Thyroid gland (tissue), 4 donors: ENCODE measurements at regions of chr10 and their contacts with region 1.

Region 1: GRCh38 chr10:69392481-69393000 is 24.2 kb downstream of the TACR2 start:
- DNase-seq: peak; percentile 92 to 93
- H3K4me3 ChIP-seq: no peak overlapping the region
- H3K27ac ChIP-seq: peak overlapping the region; percentile 68 to 87 (median 75)
- H3K4me1 ChIP-seq: peaks cover 31 to 39% of the 10 kb centered on the region in 2 donors
- H3K27me3 ChIP-seq: no peaks in the 10 kb centered on the region
- CTCF ChIP-seq: peak; percentile 94 to 99 (median 97)
- POLR2A ChIP-seq: no peak

Region 2: GRCh38 chr10:69237528-69238159 is 154.9 kb before region 1 on chr10:
- intact Hi-C with region 1: loop called (anchors 2 kb)
- DNase-seq: peak; percentile 83 to 90
- H3K4me3 ChIP-seq: no peak overlapping the region
- H3K27ac ChIP-seq: no peak overlapping the region
- H3K4me1 ChIP-seq: no peaks in the 10 kb centered on the region
- H3K27me3 ChIP-seq: no peaks in the 10 kb centered on the region
- CTCF ChIP-seq: peak; percentile 73 to 98 (median 88)
- POLR2A ChIP-seq: no peak

Region 3: DNA sequence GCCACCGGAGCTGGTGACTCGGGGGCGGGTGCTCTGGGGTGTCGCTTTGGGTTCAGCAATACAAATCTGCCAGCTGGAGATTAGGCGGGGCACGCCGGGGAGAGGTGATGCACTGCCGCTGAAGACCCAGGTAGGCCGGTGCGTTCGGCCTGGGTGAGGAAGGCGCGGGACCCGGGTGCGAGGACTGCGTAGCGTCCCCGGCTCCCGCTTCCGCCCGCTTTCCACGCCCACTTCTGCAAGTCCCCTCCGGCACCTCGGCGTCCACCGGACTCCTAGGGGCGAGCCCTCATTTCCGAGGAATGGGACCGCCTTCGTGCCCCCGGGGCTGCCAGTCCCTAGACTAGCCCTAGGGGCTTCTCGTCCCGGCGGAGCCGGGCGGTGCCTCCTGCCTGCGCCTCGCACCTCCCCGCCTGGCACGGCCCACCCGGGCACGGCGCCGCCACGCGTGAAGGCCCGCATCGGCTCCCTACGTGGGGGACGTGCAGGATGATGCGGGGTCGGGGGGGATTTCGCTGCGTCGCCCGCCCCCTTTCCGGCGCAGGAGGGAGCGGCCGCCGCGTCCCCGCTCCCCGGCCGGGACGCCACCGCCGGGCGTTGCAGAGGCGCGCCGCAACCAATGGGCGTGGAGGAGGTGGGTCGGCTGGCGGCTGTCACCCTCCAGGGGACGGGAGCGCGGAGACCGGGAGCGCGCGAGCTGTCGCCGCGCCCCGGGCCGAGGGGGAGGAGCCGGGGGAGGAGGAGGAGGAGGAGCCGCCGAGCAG is 74.3 kb before region 1 on chr10:
- intact Hi-C with region 1: loop called (anchors 5 kb)
- DNase-seq: peak; percentile 91 to 93
- H3K4me3 ChIP-seq: peak overlapping the region; percentile 80 to 99 (median 95)
- H3K27ac ChIP-seq: peak overlapping the region; percentile 85 to 95 (median 91)
- H3K4me1 ChIP-seq: peaks cover 26 to 35% of the 10 kb centered on the region in 2 donors
- H3K27me3 ChIP-seq: no peaks in the 10 kb centered on the region
- CTCF ChIP-seq: peak in 1 of 6 experiments; percentile 15
- POLR2A ChIP-seq: peak in 1 of 2 donors; percentile 99

Region 4: GRCh38 chr10:69333205-69333604 is 59.3 kb before region 1 on chr10:
- intact Hi-C with region 1: loop called (anchors 5 kb)
- DNase-seq: peak; percentile 82
- H3K4me3 ChIP-seq: no peak overlapping the region
- H3K27ac ChIP-seq: peak overlapping the region; percentile 79 to 92 (median 90)
- H3K4me1 ChIP-seq: peaks cover 79 to 98% of the 10 kb centered on the region in 2 donors
- H3K27me3 ChIP-seq: no peaks in the 10 kb centered on the region
- CTCF ChIP-seq: peak in 5 of 6 experiments; percentile 15 to 56 (median 51)
- POLR2A ChIP-seq: peak in 1 of 2 donors; percentile 41